MCF 10A (cell line): ENCODE measurements at regions of chr1 and their contacts with region 1.

Region 1: GRCh38 chr1:119743781-119744597 is 24.7 kb downstream of the HMGCS2 start:
- DNase-seq: peak; percentile 82
- H3K4me3 Mint-ChIP-seq: no peak overlapping the region
- H3K27ac Mint-ChIP-seq: no peak overlapping the region
- H3K4me1 Mint-ChIP-seq: peaks cover 6% of the 10 kb centered on the region
- H3K27me3 Mint-ChIP-seq: no peaks in the 10 kb centered on the region
- CTCF ChIP-seq: peak; percentile 73

Region 2: DNA sequence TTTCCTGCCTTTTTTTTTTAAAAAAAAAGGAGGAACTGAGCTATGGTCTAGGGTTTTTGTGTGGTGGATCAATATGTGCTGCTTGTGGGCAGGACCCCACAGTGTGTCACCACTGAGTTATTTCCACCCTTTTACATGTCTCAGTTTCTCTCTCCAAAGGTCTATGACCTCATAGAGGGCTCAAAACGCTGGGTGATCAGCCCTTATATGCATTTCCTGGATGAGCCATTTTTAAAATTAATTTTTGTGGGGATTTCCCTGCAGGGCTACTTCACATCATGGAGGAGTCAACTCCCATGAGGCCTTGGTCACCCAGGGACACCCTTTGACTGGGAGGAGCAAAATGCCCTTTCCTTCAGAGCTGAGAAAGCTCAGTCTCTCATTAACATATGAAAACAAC is 396.1 kb before region 1 on chr1:
- CTCF ChIA-PET with region 1: no interaction called
- POLR2A ChIA-PET with region 1: no interaction called
- intact Hi-C with region 1: no loop called
- DNase-seq: no peak
- H3K4me3 Mint-ChIP-seq: no peak overlapping the region
- H3K27ac Mint-ChIP-seq: no peak overlapping the region
- H3K4me1 Mint-ChIP-seq: no peaks in the 10 kb centered on the region
- H3K27me3 Mint-ChIP-seq: no peaks in the 10 kb centered on the region
- CTCF ChIP-seq: no peak

Region 3: DNA sequence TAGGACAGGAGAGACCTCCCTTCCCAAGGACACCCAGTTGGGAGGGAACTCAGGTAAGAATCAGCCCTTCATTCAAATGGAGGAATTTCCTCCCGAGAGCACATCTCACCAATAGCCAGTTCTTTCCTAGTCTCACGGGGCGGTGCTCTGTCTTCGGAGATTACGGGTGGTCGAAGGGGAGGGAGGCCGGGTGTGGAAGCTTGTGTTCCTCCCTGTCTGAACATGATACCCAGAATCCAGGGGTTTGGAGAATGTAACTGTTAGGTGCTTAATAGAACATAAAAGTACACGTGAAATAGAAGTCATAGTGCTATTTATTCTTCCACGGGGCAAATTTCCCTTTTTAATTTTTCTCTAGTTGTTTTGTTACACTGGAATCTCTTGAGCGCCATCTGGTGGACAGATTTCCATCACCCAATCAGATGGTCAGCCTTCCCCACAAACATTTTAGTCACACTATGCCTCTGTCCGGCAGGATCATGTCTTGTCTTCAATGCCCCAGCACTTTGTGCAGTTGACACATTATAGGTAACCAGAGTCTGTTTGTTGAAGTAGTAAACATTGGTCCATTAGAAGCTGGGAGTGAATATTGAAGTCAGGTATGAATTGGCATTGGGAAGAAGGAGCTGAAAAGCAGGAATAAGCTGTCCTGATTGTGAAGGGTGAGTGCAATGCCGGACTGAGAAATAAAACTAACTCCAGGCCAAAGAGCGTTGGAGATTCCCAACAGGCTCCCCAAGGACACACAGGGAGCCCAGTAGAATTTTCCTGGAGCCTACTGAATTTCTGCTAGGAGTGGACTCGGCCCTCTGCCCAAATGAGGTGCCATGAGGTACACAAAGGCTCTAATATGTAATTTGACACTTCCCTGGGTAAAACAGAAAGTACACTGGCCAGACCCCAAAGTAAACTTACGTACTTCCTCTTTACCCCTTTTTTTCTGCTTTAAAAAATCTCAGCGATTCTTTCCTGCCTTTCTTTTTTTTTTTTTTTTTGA is 68.3 kb before region 1 on chr1:
- CTCF ChIA-PET with region 1: interaction called, 19 read pairs
- POLR2A ChIA-PET with region 1: no interaction called
- intact Hi-C with region 1: loop called (anchors 5 kb)
- DNase-seq: peak; percentile 92
- H3K4me3 Mint-ChIP-seq: peak overlapping the region; percentile 67
- H3K27ac Mint-ChIP-seq: peak overlapping the region; percentile 28
- H3K4me1 Mint-ChIP-seq: peaks cover 21% of the 10 kb centered on the region
- H3K27me3 Mint-ChIP-seq: no peaks in the 10 kb centered on the region
- CTCF ChIP-seq: peak; percentile 77

Region 4: GRCh38 chr1:119758584-119758983 is 14.6 kb after region 1 on chr1:
- CTCF ChIA-PET with region 1: interaction called, 65 read pairs
- POLR2A ChIA-PET with region 1: no interaction called
- intact Hi-C with region 1: no loop called
- DNase-seq: no peak
- H3K4me3 Mint-ChIP-seq: no peak overlapping the region
- H3K27ac Mint-ChIP-seq: no peak overlapping the region
- H3K4me1 Mint-ChIP-seq: no peaks in the 10 kb centered on the region
- H3K27me3 Mint-ChIP-seq: no peaks in the 10 kb centered on the region
- CTCF ChIP-seq: no peak

Region 5: GRCh38 chr1:119808972-119809550 is 65.1 kb after region 1 on chr1:
- CTCF ChIA-PET with region 1: interaction called, 36 read pairs
- POLR2A ChIA-PET with region 1: no interaction called
- intact Hi-C with region 1: no loop called
- DNase-seq: peak; percentile 76
- H3K4me3 Mint-ChIP-seq: no peak overlapping the region
- H3K27ac Mint-ChIP-seq: no peak overlapping the region
- H3K4me1 Mint-ChIP-seq: no peaks in the 10 kb centered on the region
- H3K27me3 Mint-ChIP-seq: peaks cover 53% of the 10 kb centered on the region
- CTCF ChIP-seq: peak; percentile 92

Region 6: DNA sequence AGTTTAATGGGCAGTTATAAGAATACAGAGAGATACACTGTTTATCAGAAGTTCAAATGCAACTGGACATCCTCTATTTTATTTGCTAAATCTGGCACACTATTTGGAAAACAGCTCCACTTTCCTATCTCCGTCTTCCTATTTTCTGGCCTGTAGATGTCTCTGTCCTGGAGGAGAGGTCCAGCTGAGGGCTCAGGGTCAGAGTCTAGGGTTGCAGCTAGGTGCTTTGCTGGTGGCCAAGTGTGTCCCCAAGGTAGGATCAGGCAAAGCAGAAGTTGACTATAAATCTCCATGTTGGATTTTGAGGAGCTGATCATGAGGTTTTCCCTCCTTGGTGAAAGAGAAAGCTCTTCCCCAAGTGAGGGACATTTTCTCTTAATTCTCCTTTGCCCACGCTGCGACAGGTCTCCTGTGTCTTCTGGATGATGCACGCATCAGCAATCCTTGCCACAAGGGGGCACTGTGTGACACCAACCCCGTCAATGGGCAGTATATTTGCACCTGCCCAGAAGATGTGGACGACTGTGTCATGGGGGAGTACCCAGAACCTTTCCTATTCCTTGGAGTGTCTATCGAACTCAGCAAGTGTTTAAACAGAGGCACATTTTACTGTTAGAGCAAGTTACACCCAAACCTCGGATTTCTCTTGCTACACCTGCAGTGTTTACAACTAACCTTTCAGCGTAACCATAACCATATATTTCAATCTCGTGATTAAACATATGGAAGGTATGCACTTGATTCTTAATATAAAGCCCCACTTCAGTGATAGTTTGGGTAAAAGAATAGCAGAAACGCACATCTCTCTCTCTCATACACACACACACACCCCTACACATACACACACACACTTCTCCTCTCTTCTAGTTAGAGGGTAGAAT is 142.2 kb after region 1 on chr1:
- CTCF ChIA-PET with region 1: interaction called, 18 read pairs
- POLR2A ChIA-PET with region 1: no interaction called
- intact Hi-C with region 1: no loop called
- DNase-seq: peak; percentile 71
- H3K4me3 Mint-ChIP-seq: no peak overlapping the region
- H3K27ac Mint-ChIP-seq: no peak overlapping the region
- H3K4me1 Mint-ChIP-seq: no peaks in the 10 kb centered on the region
- H3K27me3 Mint-ChIP-seq: peaks cover 9% of the 10 kb centered on the region
- CTCF ChIP-seq: peak; percentile 88